Dendritic cell treated with granulocyte-macrophage colony-stimulating factor and Interleukin-4, amounts not matched to agents 40 ng/mL and 50 ng/mL, for 4 days (primary cell): ENCODE measurements at regions of chr4 and their contacts with region 1.

Region 1: DNA sequence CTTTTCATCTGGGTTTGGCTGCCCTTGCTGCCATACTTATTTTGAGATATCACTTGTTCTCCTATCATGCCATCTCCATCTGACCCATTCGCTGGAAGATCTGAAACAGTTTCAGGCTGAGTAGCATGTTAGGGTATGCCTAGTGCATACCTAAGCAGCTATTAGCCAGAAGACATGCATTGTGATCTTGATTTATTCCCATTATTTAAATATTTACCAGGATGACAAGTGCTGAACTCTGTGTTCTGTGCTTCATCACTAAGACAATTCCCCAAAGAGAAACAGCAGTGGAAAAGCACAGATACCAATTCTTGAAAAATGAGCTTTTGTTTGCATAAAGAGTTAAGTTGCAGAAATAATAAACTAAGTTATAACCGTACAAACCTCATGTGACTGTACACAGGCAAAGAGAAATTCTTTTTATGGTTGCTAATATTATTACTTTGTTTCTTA is 271.0 kb upstream of the ARSJ start:
- H3K4me3 Mint-ChIP-seq: no peak overlapping the region
- H3K27ac Mint-ChIP-seq: no peak overlapping the region
- H3K4me1 Mint-ChIP-seq: no peaks in the 10 kb centered on the region
- H3K27me3 Mint-ChIP-seq: no peaks in the 10 kb centered on the region

Region 2: DNA sequence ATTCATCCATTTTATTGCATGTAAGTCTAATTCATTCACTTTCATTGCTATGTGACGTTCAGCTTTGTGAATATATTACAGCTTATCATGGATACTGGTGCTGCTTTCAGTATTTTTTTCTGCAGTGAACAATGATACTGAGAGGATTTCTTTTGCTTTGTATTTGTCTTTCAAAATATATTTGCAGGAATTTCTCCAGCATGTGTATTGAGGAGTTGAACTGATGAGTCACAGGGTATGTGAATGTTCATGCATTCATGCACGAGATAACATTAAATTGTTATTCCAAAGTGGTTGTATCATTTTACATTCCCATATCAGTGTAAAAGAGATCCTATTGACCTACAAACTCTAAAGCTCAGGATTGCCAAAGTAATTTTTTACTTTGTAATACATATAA is 12.8 kb after region 1 on chr4:
- intact Hi-C with region 1: loop called (anchors 1 kb)
- H3K4me3 Mint-ChIP-seq: no peak overlapping the region
- H3K27ac Mint-ChIP-seq: no peak overlapping the region
- H3K4me1 Mint-ChIP-seq: no peaks in the 10 kb centered on the region
- H3K27me3 Mint-ChIP-seq: no peaks in the 10 kb centered on the region